ENCODE measurements at regions of chr5 and their contacts with region 1.

Region 1: DNA sequence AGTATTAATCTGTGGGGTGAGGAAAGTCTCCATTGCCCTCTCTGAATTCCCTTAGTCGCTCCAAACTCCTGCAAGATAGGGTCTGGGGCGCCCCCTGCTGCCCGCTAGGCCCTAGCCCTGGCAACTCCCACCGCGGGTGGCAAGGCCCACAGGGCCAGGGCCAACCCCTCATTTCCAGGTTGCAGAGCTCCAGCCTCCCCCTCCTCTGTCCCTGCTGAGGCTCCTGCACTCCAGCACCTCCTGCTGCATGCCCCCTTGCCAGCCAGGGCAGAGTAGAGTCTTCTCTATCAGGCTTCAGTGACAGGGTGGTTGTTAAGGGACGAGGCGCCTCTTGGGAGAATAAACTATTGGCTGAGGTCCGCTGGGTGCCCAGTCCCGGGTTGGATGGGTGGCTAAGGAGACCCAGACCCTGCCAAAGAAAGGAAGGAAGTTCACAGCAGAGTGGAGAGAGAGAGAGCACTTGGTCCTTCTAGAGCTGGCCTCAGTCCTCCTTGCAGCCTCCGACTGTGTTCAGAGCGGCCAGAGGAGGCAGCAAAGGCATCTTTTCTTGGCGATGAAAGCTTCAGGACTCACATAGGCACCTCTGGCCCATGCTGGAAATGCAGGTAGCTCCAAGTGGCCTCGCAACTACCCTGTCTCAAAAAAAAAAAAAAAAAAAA is 45.6 kb downstream of the SAR1B start:
- DNase-seq: no peak
- ATAC-seq: peak; percentile 97
- H3K4me3 ChIP-seq: 0 out of 4 replicates have a peak overlapping the region, but pooled peaks of 1 of the 2 experiments have one; percentile 8
- H3K27ac ChIP-seq: no peak overlapping the region
- H3K4me1 ChIP-seq: peaks cover 4% of the 10 kb centered on the region; the same call in 1 of the 2 replicates
- H3K27me3 ChIP-seq: no peaks in the 10 kb centered on the region
- CTCF ChIP-seq: peak; percentile 96

Region 2: GRCh38 chr5:134304311-134304710 is 282.7 kb before region 1 on chr5:
- CTCF ChIA-PET with region 1: interaction called, 7 read pairs
- POLR2A ChIA-PET with region 1: no interaction called
- in situ Hi-C with region 1: no loop called
- intact Hi-C with region 1: loop called (anchors 2 kb)
- DNase-seq: no peak
- ATAC-seq: no peak
- H3K4me3 ChIP-seq: no peak overlapping the region
- H3K27ac ChIP-seq: no peak overlapping the region
- H3K4me1 ChIP-seq: no peaks in the 10 kb centered on the region
- H3K27me3 ChIP-seq: no peaks in the 10 kb centered on the region
- CTCF ChIP-seq: no peak

Region 3: GRCh38 chr5:134365604-134366003 is 221.4 kb before region 1 on chr5:
- CTCF ChIA-PET with region 1: interaction called, 14 read pairs
- POLR2A ChIA-PET with region 1: no interaction called
- in situ Hi-C with region 1: no loop called
- intact Hi-C with region 1: loop called (anchors 10 kb)
- DNase-seq: no peak
- ATAC-seq: no peak
- H3K4me3 ChIP-seq: no peak overlapping the region
- H3K27ac ChIP-seq: no peak overlapping the region
- H3K4me1 ChIP-seq: peaks cover 12% of the 10 kb centered on the region
- H3K27me3 ChIP-seq: no peaks in the 10 kb centered on the region
- CTCF ChIP-seq: no peak

Region 4: DNA sequence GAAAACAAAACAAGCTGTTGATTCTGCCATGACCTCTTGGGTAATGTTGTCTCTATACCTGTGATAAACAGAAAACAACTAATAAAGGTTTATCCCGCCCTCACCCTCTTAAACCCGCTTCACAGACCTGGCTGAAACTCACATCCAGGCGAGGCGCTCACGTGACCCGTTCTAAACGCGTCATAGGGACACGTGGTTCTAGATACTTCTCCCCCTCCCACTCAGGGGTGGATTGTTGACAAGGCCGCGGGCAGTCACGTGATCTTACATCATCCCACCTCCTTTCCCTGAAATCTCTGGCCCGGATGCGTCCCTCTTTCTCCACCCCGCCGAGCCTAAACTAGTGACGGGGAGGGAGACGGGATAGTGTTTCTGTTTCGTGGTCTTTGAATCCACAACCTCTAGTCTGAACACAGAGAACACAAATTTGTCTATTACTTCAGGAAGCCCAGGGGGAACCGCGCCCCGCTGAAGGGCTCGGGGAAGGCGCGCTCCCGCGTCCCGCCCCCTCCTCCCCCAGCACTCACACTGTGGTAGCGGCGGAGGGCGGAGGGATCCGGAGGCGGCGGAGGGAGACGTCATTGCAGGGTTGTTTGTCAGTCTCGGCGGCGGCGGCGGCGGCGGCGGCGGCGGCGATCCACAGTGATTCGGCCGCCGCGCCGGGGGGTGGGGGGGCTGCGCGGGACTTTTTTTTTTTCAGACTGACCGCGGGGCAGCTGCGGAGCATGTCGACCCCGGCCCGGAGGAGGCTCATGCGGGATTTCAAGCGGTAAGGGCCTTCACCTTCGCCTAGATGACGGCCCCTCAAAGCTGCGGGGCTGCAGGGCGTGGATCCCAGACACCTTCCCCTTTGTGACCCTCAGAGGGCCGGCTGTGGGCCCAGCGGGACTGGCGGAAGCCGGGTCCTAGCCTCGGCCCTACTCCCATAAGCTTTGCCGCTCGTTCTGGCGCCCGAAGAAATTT is 215.8 kb before region 1 on chr5 and contains the start of gene UBE2B:
- CTCF ChIA-PET with region 1: no interaction called
- POLR2A ChIA-PET with region 1: interaction called, 6 read pairs
- in situ Hi-C with region 1: no loop called
- intact Hi-C with region 1: loop called (anchors 10 kb)
- DNase-seq: peak; percentile 98
- ATAC-seq: peak; percentile 89
- H3K4me3 ChIP-seq: peak within 1 kb of the TSS; percentile 81 to 98
- H3K27ac ChIP-seq: peak within 1 kb of the TSS; percentile 96
- H3K4me1 ChIP-seq: peaks cover 12% of the 10 kb centered on the region
- H3K27me3 ChIP-seq: no peaks in the 10 kb centered on the region
- CTCF ChIP-seq: no peak
- total RNA-seq, gene UBE2B: 97.8 TPM

Region 5: DNA sequence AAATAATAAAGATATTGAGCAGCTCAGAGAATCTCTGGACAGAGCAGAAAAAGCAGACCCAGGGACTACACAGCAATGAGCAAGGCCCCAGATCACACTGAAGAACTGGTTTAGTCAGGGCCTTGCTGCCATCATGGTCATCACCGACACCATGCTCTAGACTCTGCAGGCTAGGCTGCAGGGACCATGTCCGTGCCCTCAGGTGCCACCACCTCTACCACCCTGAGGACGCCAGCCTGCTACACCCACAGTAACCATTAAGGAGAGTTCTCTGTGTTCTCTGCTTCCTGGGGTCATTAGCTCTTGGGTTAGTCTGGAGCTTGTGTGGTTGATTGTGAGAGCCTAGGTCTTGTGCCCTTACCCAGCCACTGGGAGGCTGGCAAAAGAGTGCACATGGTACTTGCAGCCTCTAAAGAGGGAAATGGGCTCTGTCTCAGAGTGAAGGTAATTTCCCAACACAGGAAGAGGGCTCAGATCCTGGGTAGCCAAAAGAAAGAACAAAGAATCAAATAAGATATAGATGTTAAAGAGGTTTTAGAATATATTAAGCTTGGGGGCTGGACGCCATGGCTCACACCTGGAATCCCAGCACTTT is 93.4 kb before region 1 on chr5:
- CTCF ChIA-PET with region 1: interaction called, 10 read pairs
- POLR2A ChIA-PET with region 1: no interaction called
- in situ Hi-C with region 1: no loop called
- intact Hi-C with region 1: no loop called
- DNase-seq: no peak
- ATAC-seq: no peak
- H3K4me3 ChIP-seq: no peak overlapping the region
- H3K27ac ChIP-seq: no peak overlapping the region
- H3K4me1 ChIP-seq: no peaks in the 10 kb centered on the region
- H3K27me3 ChIP-seq: no peaks in the 10 kb centered on the region
- CTCF ChIP-seq: no peak

Region 6: GRCh38 chr5:134603059-134603458 is 16.1 kb after region 1 on chr5:
- CTCF ChIA-PET with region 1: interaction called, 12 read pairs
- POLR2A ChIA-PET with region 1: no interaction called
- in situ Hi-C with region 1: no loop called
- intact Hi-C with region 1: no loop called
- DNase-seq: peak; percentile 22
- ATAC-seq: no peak
- H3K4me3 ChIP-seq: no peak overlapping the region
- H3K27ac ChIP-seq: no peak overlapping the region
- H3K4me1 ChIP-seq: no peaks in the 10 kb centered on the region
- H3K27me3 ChIP-seq: no peaks in the 10 kb centered on the region
- CTCF ChIP-seq: no peak

Region 7: DNA sequence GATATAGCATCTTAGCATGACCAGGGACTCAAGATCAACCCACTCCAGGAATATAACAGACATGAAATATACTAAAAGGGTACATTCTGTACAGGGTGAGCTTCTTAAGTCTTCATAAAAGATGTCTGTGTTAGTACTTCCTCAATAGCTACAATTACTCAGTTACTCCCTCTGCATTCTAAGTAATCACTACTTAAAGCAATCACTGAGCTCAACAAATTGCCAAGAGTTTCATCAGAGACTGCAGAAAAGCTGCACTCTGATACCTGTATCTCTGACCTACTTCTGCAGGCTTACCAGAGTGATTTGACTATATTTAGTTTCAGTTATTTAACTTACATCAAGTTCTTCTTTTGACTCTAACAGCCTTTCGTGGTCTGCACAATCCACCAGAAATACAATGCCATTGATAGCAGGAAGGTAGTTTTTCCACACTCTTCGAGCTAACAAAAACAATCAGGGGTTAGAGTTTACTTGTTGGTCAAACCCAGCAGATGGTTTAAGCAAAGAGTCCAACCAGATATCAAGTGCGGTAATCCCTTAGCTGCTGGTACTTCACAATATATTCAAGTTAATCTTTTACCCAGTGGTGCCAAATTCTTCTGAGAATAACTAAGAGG is 22.3 kb after region 1 on chr5:
- CTCF ChIA-PET with region 1: interaction called, 12 read pairs
- POLR2A ChIA-PET with region 1: no interaction called
- in situ Hi-C with region 1: no loop called
- intact Hi-C with region 1: no loop called
- DNase-seq: no peak
- ATAC-seq: no peak
- H3K4me3 ChIP-seq: no peak overlapping the region
- H3K27ac ChIP-seq: no peak overlapping the region
- H3K4me1 ChIP-seq: no peaks in the 10 kb centered on the region
- H3K27me3 ChIP-seq: no peaks in the 10 kb centered on the region
- CTCF ChIP-seq: no peak

Region 8: GRCh38 chr5:134794082-134794481 is 207.1 kb after region 1 on chr5:
- CTCF ChIA-PET with region 1: no interaction called
- POLR2A ChIA-PET with region 1: no interaction called
- in situ Hi-C with region 1: no loop called
- intact Hi-C with region 1: no loop called
- DNase-seq: no peak
- ATAC-seq: no peak
- H3K4me3 ChIP-seq: no peak overlapping the region
- H3K27ac ChIP-seq: no peak overlapping the region
- H3K4me1 ChIP-seq: no peaks in the 10 kb centered on the region
- H3K27me3 ChIP-seq: no peaks in the 10 kb centered on the region
- CTCF ChIP-seq: no peak

Measured in Panc1 (cell line).